HEK293T (cell line): ENCODE measurements at regions of chr5 and their contacts with region 1.

Region 1: GRCh38 chr5:141513627-141514329 is 24.9 kb downstream of the PCDHGC5 start:
- DNase-seq: no peak

Region 2: DNA sequence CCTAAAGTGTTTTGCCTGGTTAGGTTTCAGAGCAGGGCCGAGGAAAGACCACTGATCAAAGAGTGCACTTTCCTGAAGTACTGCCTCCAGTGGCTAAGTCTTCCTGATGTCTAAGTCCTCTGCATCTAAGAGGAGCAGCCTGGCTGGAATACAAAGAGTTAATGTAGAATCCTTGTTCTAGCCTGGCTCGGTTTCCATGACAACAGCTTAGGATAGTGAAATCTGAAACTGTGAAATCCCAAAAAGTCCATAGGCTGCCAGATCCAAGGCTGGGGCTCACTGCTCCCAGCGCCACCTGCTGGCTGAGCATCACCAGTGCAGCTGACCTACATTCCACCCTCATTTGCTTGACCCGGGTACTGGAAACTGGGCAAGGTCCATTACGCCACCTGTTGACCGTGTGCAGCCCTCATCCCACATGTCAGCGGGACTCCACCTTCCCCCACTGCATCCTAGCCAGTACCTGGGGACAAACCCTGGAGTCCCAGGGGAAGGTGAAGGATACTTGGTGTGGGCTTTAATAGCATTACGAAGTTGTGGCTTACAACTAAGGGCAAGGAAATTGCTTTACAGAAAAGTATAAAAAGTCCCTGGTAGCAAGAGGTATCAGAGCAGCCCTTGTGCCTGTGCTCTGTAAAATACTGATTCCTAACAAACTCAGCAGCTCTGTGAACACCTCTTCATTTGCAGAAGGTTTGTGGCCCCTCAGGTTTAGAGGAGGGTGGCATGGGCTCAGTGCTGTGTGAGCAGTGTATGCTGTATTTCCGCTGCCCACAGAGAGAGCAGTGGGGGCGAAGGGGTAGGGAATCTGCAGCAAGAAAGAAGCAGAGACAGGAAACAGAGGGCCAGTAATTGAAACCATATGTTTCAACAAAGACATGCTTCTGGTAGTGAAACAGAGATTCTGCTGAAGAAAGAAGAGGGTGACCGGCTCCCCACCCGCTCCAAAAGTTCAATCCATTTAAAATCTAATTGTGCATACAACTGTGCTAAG is 11.1 kb after region 1 on chr5:
- CTCF ChIA-PET with region 1: interaction called, 13 read pairs
- POLR2A ChIA-PET with region 1: no interaction called
- DNase-seq: peak; percentile 88